Sigmoid colon (tissue), 7 donors: ENCODE measurements at regions of chr3 and their contacts with region 1.

Region 1: GRCh38 chr3:51498876-51499738 is 708 bp downstream of the DCAF1 start:
- DNase-seq: peak; percentile 98
- H3K4me3 ChIP-seq: peak overlapping the region; percentile 59 to 94 (median 92)
- H3K27ac ChIP-seq: peak overlapping the region; percentile 98 to 100 (median 98)
- H3K4me1 ChIP-seq: peaks cover 0 to 20% (median 11%) of the 10 kb centered on the region in 4 donors
- H3K27me3 ChIP-seq: no peaks in the 10 kb centered on the region
- CTCF ChIP-seq: no peak
- EP300 ChIP-seq: no peak
- POLR2A ChIP-seq: peak in 1 of 2 donors; percentile 31

Region 2: DNA sequence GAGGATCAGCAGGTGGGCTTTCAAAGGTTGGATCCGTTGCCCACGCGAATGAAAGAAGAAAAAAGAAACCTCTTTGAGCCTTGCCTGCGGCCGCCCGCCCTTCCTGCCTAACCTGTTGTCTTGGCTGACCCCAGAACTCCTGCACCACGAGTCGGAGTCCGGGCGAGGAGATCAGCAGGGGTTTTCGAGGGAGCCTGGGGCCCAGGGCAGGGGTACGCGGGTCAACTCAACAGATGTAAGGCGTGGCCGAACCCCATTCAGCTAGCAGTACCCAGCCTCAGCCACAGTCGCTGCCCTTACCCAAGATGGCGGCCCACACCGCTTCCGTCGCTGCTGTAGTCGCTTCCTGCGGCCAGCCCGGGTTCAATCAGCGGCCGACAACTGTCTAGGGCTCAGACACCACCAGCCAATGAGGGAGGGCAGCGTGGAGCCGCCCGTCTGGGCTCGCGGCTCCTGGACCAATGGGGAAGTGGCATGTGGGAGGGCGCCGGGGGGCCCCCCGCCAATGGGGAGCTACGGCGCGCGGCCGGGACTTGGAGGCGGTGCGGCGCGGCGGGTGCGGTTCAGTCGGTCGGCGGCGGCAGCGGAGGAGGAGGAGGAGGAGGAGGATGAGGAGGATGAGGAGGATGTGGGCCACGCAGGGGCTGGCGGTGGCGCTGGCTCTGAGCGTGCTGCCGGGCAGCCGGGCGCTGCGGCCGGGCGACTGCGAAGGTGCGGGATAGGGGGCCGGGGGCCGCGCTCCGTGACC is 114.2 kb before region 1 on chr3 and contains the start of gene MANF:
- intact Hi-C with region 1: loop called (anchors 2 kb)
- DNase-seq: peak; percentile 99
- H3K4me3 ChIP-seq: peak within 1 kb of the TSS; percentile 59 to 91 (median 83)
- H3K27ac ChIP-seq: peak within 1 kb of the TSS; percentile 84 to 96 (median 92)
- H3K4me1 ChIP-seq: peaks cover 0 to 42% (median 35%) of the 10 kb centered on the region in 4 donors
- H3K27me3 ChIP-seq: no peaks in the 10 kb centered on the region
- CTCF ChIP-seq: no peak
- EP300 ChIP-seq: no peak
- POLR2A ChIP-seq: peak; percentile 24 to 51
- total RNA-seq, gene MANF: 12.2 to 26.2 (median 20.5) TPM

Region 3: DNA sequence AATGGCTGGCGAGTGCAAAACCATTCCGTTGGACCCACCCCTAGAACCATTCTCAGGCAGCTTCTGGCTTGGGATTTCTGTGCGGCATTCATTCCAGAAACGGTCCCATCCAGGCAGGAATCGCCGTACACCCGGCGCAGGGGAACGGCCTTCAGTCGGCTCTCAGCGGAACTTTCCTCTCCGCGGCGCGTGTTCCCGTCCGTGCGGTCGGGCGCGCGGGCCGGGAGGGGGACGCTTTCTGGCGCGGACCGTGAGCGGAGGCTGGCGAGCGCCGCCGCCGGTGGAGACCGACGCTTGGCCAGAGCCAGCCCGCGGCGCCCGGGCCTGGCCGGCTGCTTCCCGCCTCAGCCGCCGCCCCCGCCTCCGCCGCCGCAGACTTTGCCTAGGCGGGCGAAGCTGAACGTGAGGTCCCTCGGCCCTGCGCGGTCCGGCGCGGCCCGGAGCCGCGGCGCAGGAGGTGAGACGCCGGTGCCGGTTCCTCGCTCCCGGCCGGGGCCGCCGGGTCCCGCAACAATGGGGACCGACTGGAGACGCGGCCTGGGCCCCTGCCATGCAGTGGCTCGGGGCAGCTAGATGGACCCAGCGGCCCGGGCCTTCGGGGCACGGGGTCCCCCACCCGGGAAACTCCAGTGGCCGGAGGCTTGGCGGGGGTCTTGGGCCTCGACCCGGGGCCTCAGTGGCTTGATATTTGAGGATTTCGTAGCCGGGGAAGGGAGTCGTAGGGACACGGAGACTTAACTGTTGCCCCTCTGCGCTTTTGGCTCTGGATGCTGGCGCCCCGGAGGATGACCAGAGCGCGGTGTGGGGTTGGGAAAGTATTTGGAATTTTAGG is 39.6 kb after region 1 on chr3 and contains the start of gene RAD54L2:
- intact Hi-C with region 1: loop called (anchors 2 kb)
- DNase-seq: peak; percentile 88
- H3K4me3 ChIP-seq: peak within 1 kb of the TSS; percentile 90 to 94 (median 92)
- H3K27ac ChIP-seq: peak within 1 kb of the TSS; percentile 89 to 95 (median 92)
- H3K4me1 ChIP-seq: peaks cover 0 to 24% (median 21%) of the 10 kb centered on the region in 4 donors
- H3K27me3 ChIP-seq: no peaks in the 10 kb centered on the region
- CTCF ChIP-seq: peak in 1 of 4 experiments; percentile 33
- EP300 ChIP-seq: no peak
- POLR2A ChIP-seq: no peak
- total RNA-seq, gene RAD54L2: 15.7 to 33.0 (median 24.7) TPM

Region 4: GRCh38 chr3:51637941-51638471 is 138.9 kb after region 1 on chr3:
- intact Hi-C with region 1: loop called (anchors 1 kb)
- DNase-seq: no peak
- H3K4me3 ChIP-seq: no peak overlapping the region
- H3K27ac ChIP-seq: no peak overlapping the region
- H3K4me1 ChIP-seq: no peaks in the 10 kb centered on the region
- H3K27me3 ChIP-seq: no peaks in the 10 kb centered on the region
- CTCF ChIP-seq: peak in 3 of 4 experiments; percentile 39 to 60 (median 44)
- EP300 ChIP-seq: no peak
- POLR2A ChIP-seq: no peak

Region 5: GRCh38 chr3:51799879-51800749 is 301.0 kb after region 1 on chr3:
- intact Hi-C with region 1: loop called (anchors 1 kb)
- DNase-seq: no peak
- H3K4me3 ChIP-seq: no peak overlapping the region
- H3K27ac ChIP-seq: no peak overlapping the region
- H3K4me1 ChIP-seq: peaks cover 0 to 4% (median 0%) of the 10 kb centered on the region in 4 donors
- H3K27me3 ChIP-seq: peaks cover 0 to 11% (median 0%) of the 10 kb centered on the region in 3 donors
- CTCF ChIP-seq: peak; percentile 28 to 70 (median 47)
- EP300 ChIP-seq: no peak
- POLR2A ChIP-seq: no peak